Cardiac septum (tissue), 1 donor: ENCODE measurements at regions of chr15 and their contacts with region 1.

Region 1: GRCh38 chr15:68820295-68821189 is at the start of gene ANP32A:
- DNase-seq: peak; percentile 97
- total RNA-seq, gene ANP32A: 180 TPM

Region 2: DNA sequence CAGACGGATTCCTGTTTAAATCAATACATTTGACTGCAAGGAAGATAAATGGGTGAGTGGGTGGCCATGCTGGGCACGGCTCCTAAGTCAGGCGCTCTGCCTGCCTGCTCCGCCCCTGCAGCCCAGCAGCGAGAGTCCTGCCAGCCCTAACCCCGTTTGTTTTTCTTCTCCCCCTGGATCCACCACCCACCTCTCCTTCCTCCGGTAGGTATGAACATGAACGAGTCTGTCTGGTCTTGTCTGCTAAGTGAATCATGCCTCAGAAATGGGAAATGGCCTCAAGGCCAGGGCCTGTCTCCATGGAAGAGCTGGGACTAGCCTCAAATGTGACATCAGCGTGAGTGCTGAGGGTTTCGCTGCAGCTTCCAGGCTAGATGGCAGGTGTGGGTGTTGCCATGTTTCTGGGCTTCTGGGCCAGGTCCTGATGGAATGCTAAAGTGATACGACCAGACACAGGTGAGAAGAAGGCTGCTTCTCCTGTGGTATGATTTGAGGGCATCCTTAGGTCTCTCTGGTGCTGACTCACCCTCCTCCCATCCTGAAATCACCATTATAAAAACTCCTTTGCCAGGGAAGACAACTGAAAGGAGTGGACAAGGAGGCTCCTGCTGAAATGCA is 548.6 kb before region 1 on chr15:
- intact Hi-C with region 1: no loop called
- DNase-seq: no peak

Region 3: DNA sequence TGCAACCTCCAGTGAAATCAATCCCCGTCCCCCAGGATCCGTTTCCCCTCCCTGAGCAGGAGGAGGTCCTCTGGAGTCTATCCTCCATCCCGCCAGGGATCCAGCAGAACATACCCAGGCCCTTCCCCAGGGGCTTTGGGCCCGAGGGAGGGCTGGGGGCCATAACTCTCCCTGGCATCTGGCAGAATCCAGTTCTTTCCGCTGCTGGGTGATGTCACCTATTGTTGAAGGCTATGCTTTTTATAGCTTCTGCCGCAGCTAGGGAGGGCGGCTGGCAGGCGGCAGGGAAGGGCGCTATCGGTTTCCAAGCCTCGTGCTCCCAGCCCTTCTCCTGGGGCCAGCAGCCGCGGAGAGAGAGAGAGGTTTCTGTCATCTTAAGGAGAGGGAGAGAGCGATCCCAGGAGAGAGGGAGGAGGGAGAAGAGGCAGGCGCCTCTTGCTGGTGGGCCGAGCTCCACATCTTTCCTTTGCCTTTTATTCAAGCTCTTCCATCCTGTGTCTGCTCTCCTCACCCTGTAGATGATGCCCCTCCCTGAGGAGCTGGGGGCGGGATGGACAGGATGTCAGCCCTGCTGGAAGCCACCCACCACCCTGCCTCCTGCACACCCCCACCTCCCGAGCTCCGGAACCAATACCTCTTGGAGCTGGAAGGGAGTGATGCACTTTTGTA is 120.0 kb before region 1 on chr15:
- intact Hi-C with region 1: loop called (anchors 2 kb)
- DNase-seq: peak; percentile 90

Region 4: DNA sequence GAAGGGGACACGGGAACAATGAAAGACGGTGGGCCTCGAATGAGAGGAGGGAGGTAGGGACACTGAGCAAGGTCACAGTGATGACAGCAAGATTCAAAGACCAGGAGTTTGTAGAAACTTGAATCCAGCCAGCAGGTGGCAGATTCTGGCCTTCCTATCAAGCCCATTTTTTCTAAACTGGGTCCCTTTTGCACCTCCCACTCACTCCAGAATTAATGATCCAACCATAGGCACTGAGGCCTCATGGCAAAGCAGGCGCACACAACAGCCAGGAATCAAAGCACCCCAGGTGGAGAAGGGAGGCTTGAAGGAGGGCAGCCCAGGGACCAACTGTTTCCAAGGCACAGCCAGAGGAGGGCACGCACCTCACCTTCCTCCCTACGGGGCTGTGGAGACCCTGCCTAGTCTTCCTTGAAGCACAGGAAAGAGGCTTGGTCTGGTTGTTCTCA is 90.0 kb before region 1 on chr15:
- intact Hi-C with region 1: loop called (anchors 5 kb)
- DNase-seq: peak; percentile 70

Region 5: GRCh38 chr15:68783226-68784058 is 37.1 kb before region 1 on chr15:
- intact Hi-C with region 1: loop called (anchors 5 kb)
- DNase-seq: peak; percentile 83

Region 6: GRCh38 chr15:68795298-68795848 is 25.2 kb before region 1 on chr15:
- intact Hi-C with region 1: loop called (anchors 2 kb)
- DNase-seq: peak; percentile 97